Panc1 (cell line): ENCODE measurements at regions of chr12 and their contacts with region 1.

Region 1: DNA sequence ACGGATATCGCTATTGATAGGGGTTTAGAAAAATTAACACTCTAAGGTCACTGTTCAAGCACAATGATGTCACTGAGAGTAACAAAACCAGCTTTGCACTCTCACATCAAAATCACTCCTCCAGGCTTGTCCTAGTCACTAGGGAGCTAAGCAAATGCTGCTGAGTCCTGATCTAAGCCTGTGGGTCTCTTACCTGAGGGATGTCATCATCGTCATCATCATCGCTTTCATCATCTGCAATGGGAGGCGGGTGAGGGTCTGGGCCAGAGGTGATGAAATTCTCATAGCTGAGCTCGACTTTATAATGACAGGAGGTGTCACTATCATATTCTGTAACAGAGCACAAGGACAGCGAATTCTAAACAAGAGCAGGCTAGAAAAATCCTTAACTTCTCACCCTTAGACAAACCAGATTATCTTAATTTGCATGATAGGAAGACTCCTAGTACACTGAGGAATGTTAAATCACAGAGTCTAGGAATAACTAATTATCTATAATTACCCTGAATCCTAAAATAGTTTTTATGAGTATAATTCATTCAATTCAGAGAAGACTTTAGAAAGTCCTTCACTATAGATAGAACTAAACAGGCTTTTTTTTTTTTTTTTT is 83.0 kb downstream of the TRAFD1 start:
- DNase-seq: no peak
- ATAC-seq: no peak
- H3K4me3 ChIP-seq: no peak overlapping the region
- H3K27ac ChIP-seq: no peak overlapping the region
- H3K4me1 ChIP-seq: no peaks in the 10 kb centered on the region
- H3K27me3 ChIP-seq: no peaks in the 10 kb centered on the region
- CTCF ChIP-seq: no peak

Region 2: DNA sequence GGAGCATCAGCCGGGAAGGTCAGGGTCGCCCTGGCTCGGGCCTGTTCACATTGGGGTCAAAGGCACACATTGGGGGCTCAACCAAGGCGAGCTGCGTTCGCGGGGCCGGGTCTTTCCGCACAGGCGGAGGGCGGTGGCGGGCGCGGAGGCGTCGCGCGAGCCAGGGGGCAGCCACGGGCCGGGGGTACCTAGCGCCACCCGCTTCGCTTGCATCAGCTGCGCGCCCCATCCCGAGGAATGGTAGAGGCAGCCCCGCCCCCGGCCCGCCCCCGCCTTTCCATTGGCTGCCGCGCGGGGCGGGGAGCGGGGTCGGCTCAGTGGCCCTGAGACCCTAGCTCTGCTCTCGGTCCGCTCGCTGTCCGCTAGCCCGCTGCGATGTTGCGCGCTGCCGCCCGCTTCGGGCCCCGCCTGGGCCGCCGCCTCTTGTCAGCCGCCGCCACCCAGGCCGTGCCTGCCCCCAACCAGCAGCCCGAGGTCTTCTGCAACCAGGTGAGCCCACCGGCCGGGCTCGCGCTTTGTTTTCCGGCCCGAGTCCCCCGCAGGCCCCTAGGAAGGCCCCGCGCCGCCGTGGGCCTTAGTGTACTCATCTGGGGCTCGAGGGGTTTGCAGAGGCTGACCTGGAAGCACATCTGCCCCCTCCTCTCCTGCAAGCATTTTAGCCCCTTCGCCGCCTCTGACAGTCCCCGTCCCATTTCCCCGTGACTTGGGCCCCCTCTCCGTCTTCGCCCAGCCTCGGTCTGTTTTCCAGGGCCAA is 441.6 kb before region 1 on chr12 and contains the start of gene ALDH2:
- CTCF ChIA-PET with region 1: no interaction called
- POLR2A ChIA-PET with region 1: no interaction called
- in situ Hi-C with region 1: no loop called
- intact Hi-C with region 1: no loop called
- DNase-seq: no peak
- ATAC-seq: peak; percentile 91
- H3K4me3 ChIP-seq: peak within 1 kb of the TSS; percentile 56 to 66
- H3K27ac ChIP-seq: peak within 1 kb of the TSS; percentile 68; the same call in 1 of the 2 replicates
- H3K4me1 ChIP-seq: 0 out of 2 replicates have a peak, but pooled peaks cover 5% of the 10 kb centered on the region
- H3K27me3 ChIP-seq: no peaks in the 10 kb centered on the region
- CTCF ChIP-seq: no peak
- total RNA-seq, gene ALDH2: 9.0 TPM

Region 3: GRCh38 chr12:111942557-111942956 is 265.8 kb before region 1 on chr12:
- CTCF ChIA-PET with region 1: no interaction called
- POLR2A ChIA-PET with region 1: no interaction called
- in situ Hi-C with region 1: no loop called
- intact Hi-C with region 1: no loop called
- DNase-seq: no peak
- ATAC-seq: no peak
- H3K4me3 ChIP-seq: no peak overlapping the region
- H3K27ac ChIP-seq: no peak overlapping the region
- H3K4me1 ChIP-seq: no peaks in the 10 kb centered on the region
- H3K27me3 ChIP-seq: no peaks in the 10 kb centered on the region
- CTCF ChIP-seq: no peak

Region 4: DNA sequence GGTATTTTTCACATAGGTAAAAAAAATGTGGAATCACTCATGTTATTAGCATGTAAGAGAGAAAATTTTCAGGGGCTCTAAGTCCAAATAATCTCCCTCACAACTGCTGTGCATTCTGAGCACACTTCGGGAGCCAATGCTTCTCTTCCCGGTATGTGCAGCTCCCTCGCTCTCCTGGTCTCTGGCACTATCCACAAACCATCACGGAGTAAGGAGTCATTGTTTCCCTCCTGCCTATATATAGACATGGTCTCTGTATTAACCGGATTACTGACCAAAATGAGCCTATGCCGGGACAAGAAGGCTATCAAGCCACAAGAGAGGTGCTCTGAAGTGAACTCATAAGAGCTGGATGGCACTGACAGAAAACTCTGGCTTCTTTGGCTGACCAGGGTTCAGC is 160.4 kb after region 1 on chr12:
- CTCF ChIA-PET with region 1: no interaction called
- POLR2A ChIA-PET with region 1: no interaction called
- in situ Hi-C with region 1: no loop called
- intact Hi-C with region 1: loop called (anchors 5 kb)
- DNase-seq: no peak
- ATAC-seq: no peak
- H3K4me3 ChIP-seq: no peak overlapping the region
- H3K27ac ChIP-seq: no peak overlapping the region
- H3K4me1 ChIP-seq: peaks cover 23% of the 10 kb centered on the region
- H3K27me3 ChIP-seq: no peaks in the 10 kb centered on the region
- CTCF ChIP-seq: no peak

Region 5: DNA sequence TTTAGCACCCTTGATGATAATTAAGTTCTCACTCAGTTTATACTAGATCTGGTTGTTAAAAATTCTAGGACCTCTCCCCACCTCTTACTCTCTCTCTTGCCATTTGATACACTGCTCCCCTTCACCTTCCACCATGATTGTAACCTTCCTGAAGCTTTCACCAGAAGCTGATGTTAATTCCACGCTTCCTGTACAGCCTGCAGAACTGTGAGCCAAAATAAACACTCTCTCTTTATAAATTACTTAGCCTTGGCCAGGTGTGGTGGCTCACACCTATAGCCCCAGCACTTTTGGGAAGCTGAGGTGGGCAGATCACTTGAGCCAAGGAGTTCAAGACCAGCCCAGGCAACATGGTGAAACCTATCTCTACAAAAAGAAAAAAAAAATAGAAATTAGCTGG is 184.9 kb after region 1 on chr12:
- CTCF ChIA-PET with region 1: no interaction called
- POLR2A ChIA-PET with region 1: no interaction called
- in situ Hi-C with region 1: no loop called
- intact Hi-C with region 1: no loop called
- DNase-seq: no peak
- ATAC-seq: no peak
- H3K4me3 ChIP-seq: no peak overlapping the region
- H3K27ac ChIP-seq: no peak overlapping the region
- H3K4me1 ChIP-seq: no peaks in the 10 kb centered on the region
- H3K27me3 ChIP-seq: no peaks in the 10 kb centered on the region
- CTCF ChIP-seq: no peak